Body of pancreas (tissue), 4 donors: ENCODE measurements at regions of chr11 and their contacts with region 1.

Region 1: DNA sequence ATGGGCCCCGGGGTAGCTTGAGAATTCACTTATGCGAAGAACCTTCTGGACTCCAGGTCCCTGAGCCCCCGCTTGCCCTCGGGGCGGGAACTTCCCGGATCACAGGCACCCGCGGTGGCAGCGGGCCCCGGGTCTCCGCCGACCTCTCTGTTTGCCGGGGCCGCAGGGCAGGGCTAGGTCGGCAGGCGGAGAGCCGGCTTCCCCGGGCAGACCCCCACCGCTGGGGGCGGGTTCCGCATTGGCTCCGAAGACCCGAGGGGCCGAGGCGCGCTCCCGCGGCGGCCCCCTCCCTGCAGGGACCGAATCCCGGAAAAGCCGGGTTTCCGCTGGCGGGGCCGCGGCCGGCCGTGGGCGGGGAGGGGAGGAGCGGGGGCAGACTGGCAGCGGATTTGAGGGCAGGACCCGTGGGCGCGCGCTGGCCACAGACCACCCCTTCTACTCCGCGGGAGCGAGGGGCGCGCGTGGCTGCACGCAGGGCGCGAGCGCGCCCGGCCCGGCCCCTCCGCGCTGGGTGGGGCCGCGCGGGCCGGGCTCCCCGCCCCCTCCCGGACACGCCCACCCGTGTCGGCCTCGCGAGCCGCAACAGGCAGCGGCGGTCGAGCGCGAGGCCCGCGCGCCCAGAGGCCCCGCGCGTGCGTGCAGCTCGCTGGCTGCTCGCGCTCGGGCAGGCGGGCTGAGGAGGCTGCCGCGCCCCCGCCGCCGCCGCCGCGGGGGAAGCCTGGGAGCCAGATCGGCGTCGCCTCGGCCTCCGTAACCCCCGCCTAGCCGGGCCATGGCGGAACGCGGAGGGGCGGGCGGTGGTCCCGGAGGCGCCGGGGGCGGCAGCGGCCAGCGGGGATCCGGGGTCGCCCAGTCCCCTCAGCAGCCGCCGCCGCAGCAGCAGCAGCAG is at the start of gene PACS1:
- DNase-seq: peak; percentile 65 to 75 (median 70)
- ATAC-seq: peak; percentile 77
- H3K4me3 ChIP-seq: peak within 1 kb of the TSS; percentile 50 to 84
- H3K27ac ChIP-seq: peak within 1 kb of the TSS; percentile 67 to 95 (median 88)
- H3K4me1 ChIP-seq: peaks cover 31% of the 10 kb centered on the region
- H3K27me3 ChIP-seq: no peaks in the 10 kb centered on the region
- CTCF ChIP-seq: peak in 2 of 7 experiments; percentile 32 to 38
- POLR2A ChIP-seq: peak in 2 of 3 donors; percentile 43 to 55
- total RNA-seq, gene PACS1: 17.5 to 19.7 TPM

Region 2: DNA sequence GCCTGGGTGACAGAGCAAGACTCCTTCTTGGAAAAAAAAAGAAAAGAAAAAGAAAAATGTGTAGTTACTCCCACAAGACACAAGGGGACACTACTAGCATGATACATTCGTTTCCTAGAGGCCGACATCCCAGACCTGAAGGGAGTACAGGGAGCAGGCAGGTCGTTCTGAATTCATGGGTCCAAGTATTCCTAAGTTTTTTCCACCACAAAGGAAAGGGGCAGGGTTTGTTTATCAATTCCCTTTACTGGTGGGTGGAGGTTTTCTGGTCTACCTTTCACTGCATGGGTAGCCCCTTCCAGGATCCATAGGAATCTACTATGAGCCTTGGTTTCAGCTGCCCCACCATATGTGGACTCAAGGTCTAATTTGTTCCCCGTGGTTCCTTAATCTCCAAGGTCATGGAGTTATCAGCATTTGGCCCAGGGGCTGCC is 703.6 kb before region 1 on chr11:
- intact Hi-C with region 1: no loop called
- DNase-seq: peak; percentile 62 to 81 (median 74)
- ATAC-seq: peak; percentile 80
- H3K4me3 ChIP-seq: no peak overlapping the region
- H3K27ac ChIP-seq: peak overlapping the region; percentile 28 to 78 (median 74)
- H3K4me1 ChIP-seq: peaks cover 50% of the 10 kb centered on the region
- H3K27me3 ChIP-seq: no peaks in the 10 kb centered on the region
- CTCF ChIP-seq: peak; percentile 70 to 99 (median 97)
- POLR2A ChIP-seq: peak in 1 of 3 donors; percentile 16

Region 3: DNA sequence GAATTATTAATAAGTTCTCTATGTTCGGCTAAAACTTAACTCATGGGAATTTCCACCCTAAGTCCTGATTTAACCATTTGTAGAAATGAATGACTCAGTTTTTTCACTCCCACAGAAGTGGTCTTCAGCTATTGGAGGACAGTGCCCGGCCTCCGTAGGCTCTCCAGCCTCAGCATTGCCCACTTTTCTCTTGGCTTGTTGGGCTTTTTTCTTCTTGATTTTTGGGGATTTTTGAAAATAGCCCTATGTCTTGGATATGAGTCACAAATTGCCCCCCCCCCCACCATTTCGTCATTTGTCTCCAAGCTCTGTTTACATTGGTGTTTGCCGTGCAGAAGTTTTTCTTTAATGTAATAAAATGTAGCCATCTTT is 66.8 kb after region 1 on chr11:
- intact Hi-C with region 1: loop called (anchors 10 kb)
- DNase-seq: peak in 1 of 4 donors; percentile 21
- ATAC-seq: no peak
- H3K4me3 ChIP-seq: no peak overlapping the region
- H3K27ac ChIP-seq: peak overlapping the region in 1 of 4 donors; percentile 2
- H3K4me1 ChIP-seq: peaks cover 24% of the 10 kb centered on the region
- H3K27me3 ChIP-seq: no peaks in the 10 kb centered on the region
- CTCF ChIP-seq: no peak
- POLR2A ChIP-seq: no peak

Region 4: GRCh38 chr11:66251809-66252208 is 181.8 kb after region 1 on chr11:
- intact Hi-C with region 1: no loop called
- DNase-seq: no peak
- ATAC-seq: no peak
- H3K4me3 ChIP-seq: no peak overlapping the region
- H3K27ac ChIP-seq: no peak overlapping the region
- H3K4me1 ChIP-seq: peaks cover 2% of the 10 kb centered on the region
- H3K27me3 ChIP-seq: no peaks in the 10 kb centered on the region
- CTCF ChIP-seq: no peak
- POLR2A ChIP-seq: no peak